ENCODE measurements at regions of chr19 and their contacts with region 1.

Region 1: GRCh38 chr19:1672038-1672768 is 19.8 kb upstream of the TCF3 start:
- DNase-seq: no peak
- ATAC-seq: peak in 3 of 4 donors; percentile 57 to 75 (median 65)
- H3K4me3 ChIP-seq: peak overlapping the region in 3 of 12 donors; percentile 10 to 23 (median 17)
- H3K27ac ChIP-seq: no peak overlapping the region
- H3K4me1 ChIP-seq: peaks cover 0 to 30% (median 4%) of the 10 kb centered on the region in 12 donors
- H3K27me3 ChIP-seq: peaks cover 45 to 92% (median 80%) of the 10 kb centered on the region in 9 donors
- CTCF ChIP-seq: peak; percentile 66 to 83 (median 79)
- POLR2A ChIP-seq: no peak

Region 2: GRCh38 chr19:1351381-1351851 is 320.8 kb before region 1 on chr19:
- intact Hi-C with region 1: no loop called
- DNase-seq: no peak
- ATAC-seq: no peak
- H3K4me3 ChIP-seq: no peak overlapping the region
- H3K27ac ChIP-seq: no peak overlapping the region
- H3K4me1 ChIP-seq: peaks cover 0 to 22% (median 12%) of the 10 kb centered on the region in 12 donors
- H3K27me3 ChIP-seq: no peaks in the 10 kb centered on the region
- CTCF ChIP-seq: no peak
- POLR2A ChIP-seq: no peak

Region 3: GRCh38 chr19:1540365-1540925 is 131.8 kb before region 1 on chr19:
- intact Hi-C with region 1: loop called in 3 of 10 experiments (anchors 5 to 10 kb)
- DNase-seq: no peak
- ATAC-seq: peak in 2 of 4 donors; percentile 64 to 71
- H3K4me3 ChIP-seq: no peak overlapping the region
- H3K27ac ChIP-seq: peak overlapping the region in 2 of 12 donors; percentile 17 to 49
- H3K4me1 ChIP-seq: peaks cover 0 to 20% (median 3%) of the 10 kb centered on the region in 12 donors
- H3K27me3 ChIP-seq: peaks cover 0 to 31% (median 1%) of the 10 kb centered on the region in 9 donors
- CTCF ChIP-seq: no peak
- POLR2A ChIP-seq: no peak

Region 4: DNA sequence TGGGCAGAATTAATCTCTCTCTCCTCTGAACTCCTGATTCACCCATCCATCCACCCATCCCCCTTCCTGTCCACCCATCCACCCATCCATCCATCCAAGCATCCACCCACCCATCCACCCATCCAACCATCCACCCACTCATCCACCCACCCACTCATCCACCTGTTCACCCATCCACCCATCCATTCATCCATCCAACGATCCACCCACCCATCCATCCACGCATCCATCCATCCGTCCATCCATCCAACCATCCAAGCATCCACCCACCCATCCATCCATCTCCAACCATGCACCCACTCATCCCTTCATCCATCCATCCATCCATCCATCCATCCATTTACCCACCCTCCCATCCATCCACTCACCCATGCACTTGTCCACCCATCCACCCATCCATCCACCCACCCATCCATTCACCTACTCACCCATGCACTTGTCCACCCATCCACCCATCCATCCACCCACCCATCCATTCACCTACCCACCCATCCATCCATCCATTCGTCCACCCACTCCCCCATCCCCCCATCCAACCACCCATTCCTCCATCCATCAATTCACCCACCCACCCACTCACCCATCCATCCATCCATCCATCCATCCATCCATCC is 122.8 kb before region 1 on chr19:
- intact Hi-C with region 1: loop called (anchors 1 to 10 kb)
- DNase-seq: no peak
- ATAC-seq: no peak
- H3K4me3 ChIP-seq: no peak overlapping the region
- H3K27ac ChIP-seq: no peak overlapping the region
- H3K4me1 ChIP-seq: peaks cover 0 to 5% (median 0%) of the 10 kb centered on the region in 12 donors
- H3K27me3 ChIP-seq: peaks cover 0 to 17% (median 7%) of the 10 kb centered on the region in 9 donors
- CTCF ChIP-seq: no peak
- POLR2A ChIP-seq: no peak

Region 5: DNA sequence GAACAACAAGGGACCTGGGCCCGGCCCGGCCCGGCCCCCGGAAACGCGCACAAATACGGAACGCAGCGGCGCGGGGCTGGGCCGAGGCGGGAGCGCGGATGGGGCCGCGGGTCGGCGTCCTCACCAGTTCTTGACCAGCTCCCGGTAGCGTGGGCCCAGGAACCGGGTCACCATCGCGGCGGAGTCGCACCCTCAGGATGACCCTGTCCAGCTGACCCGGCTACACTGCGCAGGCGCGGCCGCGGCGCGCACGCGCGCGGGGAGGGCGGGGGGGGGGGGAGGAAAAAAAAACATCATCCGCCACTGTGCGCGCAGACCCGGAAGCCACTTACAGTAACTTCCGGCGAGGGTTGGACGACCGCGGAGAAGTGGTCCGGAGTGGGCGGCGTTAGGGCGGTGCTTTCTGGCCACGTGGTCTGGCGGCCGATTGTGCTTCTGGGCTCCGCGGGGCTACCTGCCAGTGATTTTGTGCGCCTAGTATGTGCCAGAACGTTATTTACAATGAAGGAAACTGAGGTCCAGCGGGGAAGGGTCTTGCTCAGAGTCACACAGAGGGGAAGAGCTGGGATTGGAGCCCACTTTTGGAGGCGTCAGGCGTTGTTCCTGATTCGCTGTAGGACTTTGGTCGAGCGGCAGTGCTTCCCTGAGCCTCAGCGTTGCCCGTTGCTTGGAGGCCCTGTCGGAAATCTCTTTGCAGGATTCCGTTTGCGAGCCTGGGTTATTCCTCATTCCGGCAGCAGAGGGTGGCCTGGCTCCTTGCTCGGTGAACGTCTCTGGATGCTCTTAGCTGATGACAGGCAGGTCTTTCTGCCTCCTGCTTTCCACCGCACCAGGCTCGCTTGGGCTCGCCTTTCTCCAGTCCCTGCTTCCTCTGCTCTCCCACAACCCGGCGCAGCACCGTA is 66.7 kb before region 1 on chr19 and contains the start of gene UQCR11:
- intact Hi-C with region 1: loop called in 4 of 10 experiments (anchors 5 kb)
- DNase-seq: peak; percentile 96 to 97 (median 97)
- ATAC-seq: peak; percentile 94 to 97 (median 96)
- H3K4me3 ChIP-seq: peak within 1 kb of the TSS; percentile 80 to 100 (median 90)
- H3K27ac ChIP-seq: peak within 1 kb of the TSS; percentile 87 to 97 (median 95)
- H3K4me1 ChIP-seq: peaks cover 0 to 45% (median 28%) of the 10 kb centered on the region in 12 donors
- H3K27me3 ChIP-seq: no peaks in the 10 kb centered on the region
- CTCF ChIP-seq: peak; percentile 35 to 75 (median 54)
- POLR2A ChIP-seq: peak in 1 of 2 donors; percentile 51
- total RNA-seq, gene UQCR11: 170 to 982 (median 690) TPM

Region 6: DNA sequence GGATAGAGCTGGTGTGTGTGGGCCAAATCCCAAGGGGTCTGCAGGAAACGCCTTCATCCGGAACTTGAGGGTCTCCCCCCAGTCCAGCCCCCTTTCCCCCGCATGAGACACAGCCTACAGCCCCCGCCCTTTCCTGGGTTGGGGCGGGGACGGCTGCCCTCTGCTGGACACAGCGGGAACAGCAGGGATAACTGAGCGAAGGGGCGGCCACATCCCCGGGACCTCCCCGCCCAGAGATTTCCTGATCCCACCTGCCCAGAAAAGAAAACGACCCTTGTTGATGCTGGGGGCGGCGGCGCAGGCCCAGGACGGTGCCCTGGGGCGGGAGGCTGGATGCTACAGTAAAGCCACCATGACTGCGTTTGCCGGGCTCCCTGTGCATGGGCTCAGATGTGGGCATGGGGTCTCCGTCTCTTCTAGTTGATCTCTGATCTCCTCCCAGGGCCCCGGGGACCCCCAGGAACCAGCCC is 95.3 kb after region 1 on chr19:
- intact Hi-C with region 1: loop called in 4 of 10 experiments (anchors 1 to 10 kb)
- DNase-seq: peak in 2 of 5 donors; percentile 30 to 41
- ATAC-seq: peak in 3 of 4 donors; percentile 65 to 73 (median 71)
- H3K4me3 ChIP-seq: no peak overlapping the region
- H3K27ac ChIP-seq: no peak overlapping the region
- H3K4me1 ChIP-seq: peaks cover 0 to 4% (median 0%) of the 10 kb centered on the region in 12 donors
- H3K27me3 ChIP-seq: peaks cover 57 to 100% (median 76%) of the 10 kb centered on the region in 9 donors
- CTCF ChIP-seq: peak; percentile 80 to 95 (median 90)
- POLR2A ChIP-seq: no peak

Region 7: GRCh38 chr19:1819341-1820275 is 147.4 kb after region 1 on chr19:
- intact Hi-C with region 1: loop called in 3 of 10 experiments (anchors 5 to 10 kb)
- DNase-seq: peak in 1 of 5 donors; percentile 17
- ATAC-seq: no peak
- H3K4me3 ChIP-seq: no peak overlapping the region
- H3K27ac ChIP-seq: no peak overlapping the region
- H3K4me1 ChIP-seq: peaks cover 0 to 4% (median 0%) of the 10 kb centered on the region in 12 donors
- H3K27me3 ChIP-seq: no peaks in the 10 kb centered on the region
- CTCF ChIP-seq: no peak
- POLR2A ChIP-seq: no peak

Region 8: GRCh38 chr19:1825909-1826556 is 153.8 kb after region 1 on chr19:
- intact Hi-C with region 1: loop called in 2 of 10 experiments (anchors 10 kb)
- DNase-seq: peak; percentile 69 to 87 (median 76)
- ATAC-seq: peak; percentile 38 to 82 (median 76)
- H3K4me3 ChIP-seq: no peak overlapping the region
- H3K27ac ChIP-seq: no peak overlapping the region
- H3K4me1 ChIP-seq: peaks cover 0 to 14% (median 4%) of the 10 kb centered on the region in 12 donors
- H3K27me3 ChIP-seq: no peaks in the 10 kb centered on the region
- CTCF ChIP-seq: peak; percentile 81 to 88 (median 85)
- POLR2A ChIP-seq: no peak